ENCODE measurements at regions of chr14 and their contacts with region 1.

Region 1: GRCh38 chr14:50311975-50312733 is at the starts of genes DMAC2L and L2HGDH:
- DNase-seq: peak; percentile 93
- ATAC-seq: peak; percentile 95
- H3K4me3 Mint-ChIP-seq: peak within 1 kb of the TSS; percentile 85
- H3K27ac Mint-ChIP-seq: peak within 1 kb of the TSS; percentile 95
- H3K4me1 Mint-ChIP-seq: peaks cover 41% of the 10 kb centered on the region
- H3K27me3 Mint-ChIP-seq: no peaks in the 10 kb centered on the region
- total RNA-seq, gene DMAC2L: 7.4 to 12.6 TPM
- total RNA-seq, gene L2HGDH: 12.8 to 19.0 TPM

Region 2: DNA sequence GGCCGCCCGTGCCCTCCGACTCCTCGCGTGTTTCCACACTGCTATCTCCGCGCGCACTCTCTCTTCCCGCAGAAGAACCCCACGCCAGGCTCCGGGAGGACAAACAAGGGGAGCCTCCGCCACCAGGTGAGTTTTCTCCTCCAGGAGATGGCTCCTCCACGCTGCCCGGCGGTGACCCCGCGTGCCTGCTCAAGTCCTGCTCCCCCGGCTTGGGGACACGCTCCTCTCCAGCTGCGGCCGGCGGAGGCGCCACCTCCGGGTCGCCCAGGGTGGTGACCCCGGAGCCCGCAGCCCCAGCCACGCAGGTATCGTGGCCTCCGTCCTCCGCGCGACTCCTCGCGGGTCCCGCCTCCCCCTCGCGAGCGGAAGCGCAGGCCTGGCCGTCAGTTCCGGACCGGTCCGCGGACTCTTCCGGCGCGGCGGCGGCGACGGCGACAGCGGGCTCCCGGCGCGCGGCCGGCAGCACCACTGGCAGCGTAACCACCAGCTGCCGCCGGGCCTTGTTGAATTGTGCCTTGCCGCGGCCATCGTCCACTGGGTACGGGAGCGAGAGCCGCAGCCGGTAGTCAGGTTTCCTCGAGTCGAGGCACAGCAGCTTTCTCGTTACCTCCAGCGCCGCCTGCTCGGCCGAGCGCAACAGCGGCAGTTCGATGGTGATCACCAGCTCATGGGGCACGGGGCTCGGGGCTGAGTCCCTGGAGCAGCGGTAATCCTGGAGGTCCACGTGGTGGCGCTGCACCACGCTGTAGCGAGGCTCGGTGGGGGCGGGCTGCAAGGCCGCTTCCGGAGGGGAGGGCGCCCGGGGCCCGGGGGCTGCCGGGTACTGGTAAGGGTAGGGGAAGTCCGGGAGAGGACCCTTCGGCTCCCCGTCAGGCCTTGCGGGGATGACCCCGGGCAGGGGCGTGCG is 678.3 kb before region 1 on chr14:
- CTCF ChIA-PET with region 1: no interaction called
- POLR2A ChIA-PET with region 1: no interaction called
- intact Hi-C with region 1: loop called (anchors 1 to 2 kb)
- DNase-seq: peak; percentile 98
- ATAC-seq: peak; percentile 88
- H3K4me3 Mint-ChIP-seq: peak overlapping the region; percentile 98
- H3K27ac Mint-ChIP-seq: peak overlapping the region; percentile 95
- H3K4me1 Mint-ChIP-seq: peaks cover 46% of the 10 kb centered on the region
- H3K27me3 Mint-ChIP-seq: no peaks in the 10 kb centered on the region

Region 3: DNA sequence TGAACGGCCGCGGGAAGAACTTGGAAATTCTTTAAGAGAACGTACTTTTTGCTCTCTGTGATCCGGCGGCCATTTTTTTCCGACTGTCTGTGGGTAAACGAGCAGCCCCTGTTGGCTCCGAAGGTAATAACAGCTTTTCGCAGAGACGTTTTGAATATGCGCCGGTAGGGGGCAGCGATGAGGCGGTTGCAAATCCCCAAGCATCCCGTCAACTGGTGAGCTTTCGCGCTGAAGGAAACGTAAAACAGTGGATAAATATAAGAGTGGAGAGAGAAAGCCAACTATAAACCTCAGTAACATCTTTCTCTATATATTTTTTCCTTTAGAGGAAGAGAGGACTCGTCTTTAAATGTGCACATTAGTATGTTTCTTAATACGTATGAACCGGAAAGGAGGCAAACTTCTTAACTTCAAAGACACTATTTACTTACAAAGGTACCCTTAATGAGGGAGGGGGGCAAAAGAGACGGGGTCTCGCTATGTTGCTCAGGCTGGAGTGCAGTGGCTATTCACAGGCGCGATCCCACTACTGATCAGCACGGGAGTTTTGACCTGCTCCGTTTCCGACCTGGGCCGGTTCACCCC is 450.0 kb before region 1 on chr14:
- CTCF ChIA-PET with region 1: interaction called, 3 read pairs
- POLR2A ChIA-PET with region 1: no interaction called
- intact Hi-C with region 1: loop called in 1 of 2 experiments (anchors 1 kb)
- DNase-seq: peak; percentile 92
- ATAC-seq: peak; percentile 13
- H3K4me3 Mint-ChIP-seq: no peak overlapping the region
- H3K27ac Mint-ChIP-seq: no peak overlapping the region
- H3K4me1 Mint-ChIP-seq: peaks cover 20% of the 10 kb centered on the region
- H3K27me3 Mint-ChIP-seq: no peaks in the 10 kb centered on the region

Region 4: DNA sequence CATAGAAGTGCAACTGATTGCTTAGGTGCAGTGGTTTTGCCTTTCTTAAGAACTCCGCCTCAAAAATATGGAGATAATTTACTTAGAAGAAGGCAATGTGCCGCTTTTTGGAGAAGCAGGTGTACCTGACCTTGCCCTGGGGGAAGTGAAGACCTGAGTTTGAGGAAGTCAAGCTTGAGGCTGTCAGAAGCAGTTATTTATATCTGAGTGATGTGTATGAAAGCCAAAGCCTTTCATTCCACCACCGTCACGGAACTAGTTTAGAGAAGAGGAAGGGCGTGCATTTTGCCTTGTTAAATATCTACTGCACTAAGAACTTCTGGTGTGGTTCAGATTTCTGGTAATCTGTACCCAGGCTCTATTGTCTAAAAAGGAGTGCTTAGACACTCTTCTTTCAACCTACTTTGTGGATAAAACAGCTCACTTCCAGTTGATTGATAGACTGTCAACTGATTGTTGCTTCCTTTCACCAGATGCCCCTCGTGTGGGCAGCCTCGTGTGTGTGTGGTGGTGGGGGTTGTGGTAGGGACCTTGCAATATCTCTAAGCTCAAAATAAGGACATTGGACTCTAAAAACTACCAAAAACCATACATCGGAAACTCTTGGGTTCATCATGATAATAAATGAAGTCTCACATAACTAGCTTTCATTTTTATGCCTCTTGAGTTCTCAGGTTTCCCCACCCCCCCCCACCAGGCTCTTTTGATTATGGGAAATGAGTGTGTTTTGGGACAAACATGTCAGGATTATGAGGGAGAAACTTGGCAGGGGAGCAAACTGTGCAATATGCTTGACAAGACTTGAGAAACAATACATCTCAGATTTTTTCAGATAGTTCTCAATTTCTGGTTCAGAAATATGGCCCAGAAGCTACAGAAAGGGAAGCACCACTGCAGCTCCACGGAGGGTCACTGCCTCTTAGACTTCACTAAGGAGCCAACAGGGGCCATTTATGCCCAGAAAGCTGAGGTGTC is 340.7 kb before region 1 on chr14:
- CTCF ChIA-PET with region 1: no interaction called
- POLR2A ChIA-PET with region 1: no interaction called
- intact Hi-C with region 1: no loop called
- DNase-seq: peak; percentile 77
- ATAC-seq: peak; percentile 66
- H3K4me3 Mint-ChIP-seq: peak overlapping the region; percentile 75
- H3K27ac Mint-ChIP-seq: peak overlapping the region; percentile 98
- H3K4me1 Mint-ChIP-seq: peaks cover 67% of the 10 kb centered on the region
- H3K27me3 Mint-ChIP-seq: no peaks in the 10 kb centered on the region

Region 5: GRCh38 chr14:50116181-50116956 is 195.8 kb before region 1 on chr14 and contains the start of gene VCPKMT:
- CTCF ChIA-PET with region 1: no interaction called
- POLR2A ChIA-PET with region 1: no interaction called
- intact Hi-C with region 1: loop called in 1 of 2 experiments (anchors 2 kb)
- DNase-seq: peak; percentile 98
- ATAC-seq: peak; percentile 99
- H3K4me3 Mint-ChIP-seq: peak within 1 kb of the TSS; percentile 95
- H3K27ac Mint-ChIP-seq: peak within 1 kb of the TSS; percentile 97
- H3K4me1 Mint-ChIP-seq: peaks cover 25% of the 10 kb centered on the region
- H3K27me3 Mint-ChIP-seq: no peaks in the 10 kb centered on the region
- total RNA-seq, gene VCPKMT: 6.6 to 10.4 TPM

Region 6: GRCh38 chr14:50396631-50397390 is 84.7 kb after region 1 on chr14 and contains the start of gene CDKL1:
- CTCF ChIA-PET with region 1: interaction called, 3 read pairs
- POLR2A ChIA-PET with region 1: no interaction called
- intact Hi-C with region 1: loop called in 1 of 2 experiments (anchors 2 kb)
- DNase-seq: peak; percentile 70
- ATAC-seq: peak; percentile 75
- H3K4me3 Mint-ChIP-seq: peak within 1 kb of the TSS; percentile 82
- H3K27ac Mint-ChIP-seq: peak within 1 kb of the TSS; percentile 72
- H3K4me1 Mint-ChIP-seq: peaks cover 14% of the 10 kb centered on the region
- H3K27me3 Mint-ChIP-seq: peaks cover 6% of the 10 kb centered on the region
- total RNA-seq, gene CDKL1: 2.9 to 4.4 TPM

Region 7: GRCh38 chr14:50830932-50831725 is 519.0 kb after region 1 on chr14 and contains the start of gene NIN:
- CTCF ChIA-PET with region 1: no interaction called
- POLR2A ChIA-PET with region 1: no interaction called
- intact Hi-C with region 1: loop called in 1 of 2 experiments (anchors 2 kb)
- DNase-seq: peak; percentile 84
- ATAC-seq: peak; percentile 89
- H3K4me3 Mint-ChIP-seq: peak within 1 kb of the TSS; percentile 91
- H3K27ac Mint-ChIP-seq: peak within 1 kb of the TSS; percentile 88
- H3K4me1 Mint-ChIP-seq: peaks cover 56% of the 10 kb centered on the region
- H3K27me3 Mint-ChIP-seq: peaks cover 6% of the 10 kb centered on the region
- total RNA-seq, gene NIN: 47.5 to 53.8 TPM

Region 8: GRCh38 chr14:50964595-50965390 is 652.6 kb after region 1 on chr14:
- CTCF ChIA-PET with region 1: no interaction called
- POLR2A ChIA-PET with region 1: no interaction called
- intact Hi-C with region 1: no loop called
- DNase-seq: no peak
- ATAC-seq: no peak
- H3K4me3 Mint-ChIP-seq: no peak overlapping the region
- H3K27ac Mint-ChIP-seq: no peak overlapping the region
- H3K4me1 Mint-ChIP-seq: no peaks in the 10 kb centered on the region
- H3K27me3 Mint-ChIP-seq: no peaks in the 10 kb centered on the region